ENCODE measurements at regions of chr4 and their contacts with region 1.

Region 1: DNA sequence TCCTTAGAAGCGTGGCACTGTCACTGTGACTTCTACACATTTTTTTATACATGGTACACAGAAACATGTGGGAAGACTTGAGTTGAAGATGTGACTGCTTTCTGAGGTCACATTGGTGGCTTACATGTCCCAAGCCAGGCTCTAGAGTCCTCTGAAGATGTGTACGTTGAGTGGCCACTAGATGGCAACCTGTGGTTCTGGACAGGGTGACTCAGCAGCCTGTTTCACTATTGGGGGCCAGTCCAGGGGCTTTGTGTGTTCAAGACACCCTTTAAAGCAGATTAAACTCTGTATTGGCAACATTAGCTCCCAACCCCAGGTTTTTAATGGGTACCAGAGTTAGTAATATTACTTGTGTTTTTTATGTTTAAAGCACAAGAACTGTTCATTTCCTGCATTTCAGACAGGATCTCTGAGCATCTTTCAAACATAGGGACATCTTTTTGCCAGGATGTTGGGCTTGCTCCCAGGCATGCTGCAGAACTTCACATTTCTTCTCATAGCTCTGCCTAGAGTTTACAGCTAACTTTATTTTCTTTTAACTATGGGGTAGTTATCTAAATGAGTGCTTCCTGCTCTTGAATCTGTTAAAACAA is 53.0 kb downstream of the DCUN1D4 start:
- DNase-seq: peak; percentile 36
- ATAC-seq: peak; percentile 92
- H3K4me3 ChIP-seq: no peak overlapping the region
- H3K27ac ChIP-seq: peak overlapping the region; percentile 59
- H3K4me1 ChIP-seq: no peaks in the 10 kb centered on the region; the same call in 1 of the 2 replicates
- H3K27me3 ChIP-seq: no peaks in the 10 kb centered on the region
- CTCF ChIP-seq: peak; percentile 82

Region 2: GRCh38 chr4:51880016-51880915 is 15.6 kb before region 1 on chr4:
- CTCF ChIA-PET with region 1: no interaction called
- POLR2A ChIA-PET with region 1: interaction called, 13 read pairs
- in situ Hi-C with region 1: no loop called
- intact Hi-C with region 1: no loop called
- DNase-seq: no peak
- ATAC-seq: no peak
- H3K4me3 ChIP-seq: no peak overlapping the region
- H3K27ac ChIP-seq: no peak overlapping the region
- H3K4me1 ChIP-seq: no peaks in the 10 kb centered on the region
- H3K27me3 ChIP-seq: no peaks in the 10 kb centered on the region
- CTCF ChIP-seq: no peak

Region 3: GRCh38 chr4:51965862-51966261 is 70.0 kb after region 1 on chr4:
- CTCF ChIA-PET with region 1: interaction called, 14 read pairs
- POLR2A ChIA-PET with region 1: no interaction called
- in situ Hi-C with region 1: no loop called
- intact Hi-C with region 1: no loop called
- DNase-seq: no peak
- ATAC-seq: no peak
- H3K4me3 ChIP-seq: no peak overlapping the region
- H3K27ac ChIP-seq: no peak overlapping the region
- H3K4me1 ChIP-seq: no peaks in the 10 kb centered on the region
- H3K27me3 ChIP-seq: no peaks in the 10 kb centered on the region
- CTCF ChIP-seq: no peak

Region 4: GRCh38 chr4:52019936-52020657 is 124.2 kb after region 1 on chr4 and contains the start of gene LRRC66:
- CTCF ChIA-PET with region 1: no interaction called
- POLR2A ChIA-PET with region 1: no interaction called
- in situ Hi-C with region 1: no loop called
- intact Hi-C with region 1: loop called (anchors 5 kb)
- DNase-seq: no peak
- ATAC-seq: no peak
- H3K4me3 ChIP-seq: no peak within 1 kb of the TSS
- H3K27ac ChIP-seq: no peak within 1 kb of the TSS
- H3K4me1 ChIP-seq: no peaks in the 10 kb centered on the region
- H3K27me3 ChIP-seq: no peaks in the 10 kb centered on the region
- CTCF ChIP-seq: no peak
- total RNA-seq, gene LRRC66: 0.08 TPM

Measured in Panc1 (cell line).